Prostate gland (tissue), 2 donors: ENCODE measurements at regions of chr22 and their contacts with region 1.

Region 1: DNA sequence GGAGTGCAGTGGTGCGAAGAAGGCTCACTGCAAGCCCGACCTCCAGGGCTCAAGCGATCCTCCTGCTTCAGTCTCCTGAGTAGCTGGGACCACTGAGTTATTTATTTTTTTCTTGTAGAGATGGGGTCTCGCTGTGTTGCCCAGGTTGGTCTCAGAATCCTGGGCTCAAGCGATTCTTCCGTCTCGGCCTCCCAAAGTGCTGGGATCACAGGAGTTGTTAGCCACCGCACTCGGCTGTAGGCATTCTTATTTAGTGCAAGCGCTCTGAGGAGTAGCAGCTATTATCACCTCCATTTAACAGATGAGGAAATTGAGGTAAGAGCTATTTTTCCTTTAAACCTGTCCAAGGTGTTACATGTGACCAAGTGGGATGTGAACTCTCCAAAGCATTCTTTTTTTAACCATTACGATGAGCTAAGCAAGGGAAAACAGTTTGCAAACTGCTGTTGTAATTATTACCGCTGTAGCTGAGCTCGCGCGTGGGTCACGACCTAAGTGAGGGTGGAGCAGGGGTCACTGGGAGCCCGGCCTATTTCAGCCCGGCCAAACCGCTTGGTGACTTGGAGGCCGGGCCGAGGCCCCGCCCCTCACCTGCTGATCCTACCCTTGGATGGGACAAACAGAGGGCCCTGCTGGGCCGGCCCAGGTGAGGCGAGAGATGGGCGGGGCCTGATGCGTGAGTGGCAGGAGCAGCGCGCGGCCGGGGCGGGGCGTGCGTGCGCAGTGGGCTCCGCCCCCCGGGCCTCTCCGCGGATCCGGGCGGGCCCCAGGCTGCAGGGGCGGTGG is 449 bp upstream of the KREMEN1 start:
- DNase-seq: peak; percentile 96
- H3K4me3 ChIP-seq: peak overlapping the region; percentile 21 to 75
- H3K27ac ChIP-seq: peak overlapping the region; percentile 1 to 71
- H3K4me1 ChIP-seq: peaks cover 7% of the 10 kb centered on the region
- H3K27me3 ChIP-seq: no peaks in the 10 kb centered on the region
- CTCF ChIP-seq: peak in 1 of 4 experiments; percentile 9
- POLR2A ChIP-seq: no peak

Region 2: GRCh38 chr22:29031227-29032011 is 41.0 kb before region 1 on chr22:
- intact Hi-C with region 1: no loop called
- DNase-seq: peak; percentile 39
- H3K4me3 ChIP-seq: peak overlapping the region; percentile 34 to 35
- H3K27ac ChIP-seq: peak overlapping the region; percentile 74 to 83
- H3K4me1 ChIP-seq: peaks cover 5% of the 10 kb centered on the region
- H3K27me3 ChIP-seq: no peaks in the 10 kb centered on the region
- CTCF ChIP-seq: no peak
- POLR2A ChIP-seq: no peak

Region 3: DNA sequence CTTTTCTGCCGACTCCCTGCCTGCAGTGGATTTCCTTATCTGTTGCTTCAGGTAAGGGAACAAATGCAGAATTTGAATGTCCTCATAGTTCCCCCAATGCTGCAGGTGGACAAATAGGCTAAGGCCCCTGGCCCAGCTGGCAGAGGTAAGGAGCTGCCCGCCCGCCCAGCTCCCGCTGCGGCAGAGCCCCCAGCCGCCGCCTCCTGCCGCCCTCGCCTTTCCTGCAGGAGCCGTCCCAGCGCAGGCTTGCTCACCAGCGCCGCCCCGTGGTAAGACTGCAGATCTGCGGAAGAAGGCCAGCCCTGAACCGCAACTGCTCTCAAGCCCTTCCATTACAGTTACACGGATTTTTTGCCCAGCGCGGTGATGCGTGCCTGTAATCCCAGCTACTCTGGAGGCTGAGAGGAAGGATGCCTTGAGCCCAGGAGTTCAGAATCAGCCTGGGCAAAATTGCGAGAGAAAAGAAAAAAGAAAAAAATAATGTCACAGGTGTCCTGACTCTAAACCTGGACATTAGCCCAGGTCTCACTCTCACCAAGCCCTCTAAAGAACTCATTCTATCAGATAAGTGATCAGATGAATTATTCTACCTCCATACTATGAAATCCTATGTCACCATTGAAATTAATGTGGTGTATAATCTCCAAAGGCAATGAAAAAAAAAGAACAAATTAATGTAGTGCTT is 82.1 kb after region 1 on chr22:
- intact Hi-C with region 1: loop called (anchors 5 kb)
- DNase-seq: peak; percentile 51
- H3K4me3 ChIP-seq: no peak overlapping the region
- H3K27ac ChIP-seq: no peak overlapping the region
- H3K4me1 ChIP-seq: peaks cover 4% of the 10 kb centered on the region
- H3K27me3 ChIP-seq: no peaks in the 10 kb centered on the region
- CTCF ChIP-seq: peak; percentile 87 to 94 (median 93)
- POLR2A ChIP-seq: no peak

Region 4: DNA sequence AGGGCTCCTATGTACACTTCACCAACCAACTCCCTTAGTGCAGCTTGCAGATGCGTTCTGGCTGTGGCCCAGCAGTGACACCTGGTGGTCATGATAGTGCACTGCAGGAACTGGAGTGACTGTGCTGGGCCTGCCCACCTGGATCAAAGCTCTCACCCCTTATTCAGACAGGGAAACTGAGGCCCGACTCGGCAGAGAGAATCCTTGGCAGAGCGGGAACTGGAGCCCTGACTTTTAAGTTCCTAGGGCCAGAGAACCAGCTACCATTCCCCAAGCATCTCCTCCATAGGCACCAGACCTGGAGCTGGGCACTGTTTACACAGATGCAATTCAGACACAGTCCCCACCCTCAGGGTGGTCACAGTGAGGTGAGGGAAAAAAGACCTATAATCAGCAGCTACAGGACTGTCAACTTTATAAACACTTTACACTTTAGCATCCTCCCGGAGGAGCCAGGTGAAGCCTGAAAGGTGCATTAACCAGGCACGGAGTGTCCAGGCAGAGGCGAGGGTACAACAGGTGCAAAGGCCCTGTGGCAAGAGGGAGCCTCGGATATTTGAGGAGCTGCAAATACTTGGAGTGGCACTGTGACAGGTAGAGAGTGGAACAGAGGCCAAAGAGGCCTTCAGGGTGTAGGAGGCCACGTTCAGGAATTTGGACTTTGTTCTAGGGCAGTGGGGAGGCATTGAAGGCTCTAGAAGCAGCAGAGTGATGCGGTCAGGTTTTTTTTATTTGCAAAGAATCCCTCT is 173.4 kb after region 1 on chr22:
- intact Hi-C with region 1: loop called (anchors 10 kb)
- DNase-seq: peak; percentile 60
- H3K4me3 ChIP-seq: no peak overlapping the region
- H3K27ac ChIP-seq: no peak overlapping the region
- H3K4me1 ChIP-seq: no peaks in the 10 kb centered on the region
- H3K27me3 ChIP-seq: no peaks in the 10 kb centered on the region
- CTCF ChIP-seq: peak; percentile 89 to 93 (median 92)
- POLR2A ChIP-seq: no peak